Adrenal gland (tissue), 19 donors: ENCODE measurements at regions of chr10 and their contacts with region 1.

Region 1: DNA sequence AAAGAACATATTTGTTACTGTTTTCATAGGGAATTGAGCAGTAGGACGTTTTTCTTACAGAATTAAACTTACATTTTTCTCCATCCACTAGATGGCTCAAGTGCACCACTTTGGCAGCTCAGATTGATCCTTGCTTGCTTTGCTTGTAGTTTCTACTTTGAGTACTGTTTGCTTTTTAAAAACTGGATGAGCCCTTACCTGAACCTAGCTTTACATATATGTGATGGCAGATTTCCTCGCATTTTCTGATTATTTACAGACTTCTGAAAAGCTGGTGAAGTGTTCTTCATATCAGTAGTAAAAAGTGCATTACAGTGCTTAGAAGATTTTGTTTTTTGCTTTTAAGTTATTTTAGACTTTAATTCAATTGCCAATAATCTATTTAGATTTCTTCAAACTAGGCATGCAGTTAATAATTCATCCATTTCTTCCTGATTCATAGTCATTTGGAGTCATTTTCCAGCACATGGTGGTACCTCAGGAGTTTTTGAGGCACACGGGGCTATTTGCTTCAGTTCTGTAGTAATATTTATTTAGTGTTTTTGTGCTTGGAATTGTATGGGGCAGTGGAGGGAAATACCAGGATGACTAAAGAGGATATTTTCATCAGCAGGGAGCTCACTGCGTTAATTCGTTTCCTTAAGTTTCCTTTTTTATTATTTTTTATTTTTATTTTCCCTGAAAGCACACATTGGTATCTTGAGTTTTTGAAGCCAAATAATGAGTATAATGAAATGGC is 57.3 kb downstream of the MAPK8 start:
- DNase-seq: peak; percentile 18 to 67 (median 42)
- H3K4me3 ChIP-seq: no peak overlapping the region
- H3K27ac ChIP-seq: no peak overlapping the region
- H3K4me1 ChIP-seq: peaks cover 0 to 13% of the 10 kb centered on the region in 2 donors
- H3K27me3 ChIP-seq: no peaks in the 10 kb centered on the region
- CTCF ChIP-seq: peak; percentile 61 to 84 (median 77)
- POLR2A ChIP-seq: no peak

Region 2: GRCh38 chr10:48506147-48506917 is 142.5 kb after region 1 on chr10:
- intact Hi-C with region 1: loop called in 1 of 2 experiments (anchors 10 kb)
- DNase-seq: peak in 3 of 7 donors; percentile 32 to 56 (median 41)
- H3K4me3 ChIP-seq: no peak overlapping the region
- H3K27ac ChIP-seq: no peak overlapping the region
- H3K4me1 ChIP-seq: no peaks in the 10 kb centered on the region
- H3K27me3 ChIP-seq: no peaks in the 10 kb centered on the region
- CTCF ChIP-seq: peak; percentile 6 to 52 (median 30)
- POLR2A ChIP-seq: no peak

Region 3: GRCh38 chr10:48708144-48708543 is 344.4 kb after region 1 on chr10:
- intact Hi-C with region 1: no loop called
- DNase-seq: peak in 1 of 7 donors; percentile 7
- H3K4me3 ChIP-seq: no peak overlapping the region
- H3K27ac ChIP-seq: no peak overlapping the region
- H3K4me1 ChIP-seq: no peaks in the 10 kb centered on the region
- H3K27me3 ChIP-seq: peaks cover 4% of the 10 kb centered on the region
- CTCF ChIP-seq: no peak
- POLR2A ChIP-seq: no peak

Region 4: GRCh38 chr10:48759113-48759901 is 395.5 kb after region 1 on chr10:
- intact Hi-C with region 1: no loop called
- DNase-seq: no peak
- H3K4me3 ChIP-seq: no peak overlapping the region
- H3K27ac ChIP-seq: no peak overlapping the region
- H3K4me1 ChIP-seq: no peaks in the 10 kb centered on the region
- H3K27me3 ChIP-seq: no peaks in the 10 kb centered on the region
- CTCF ChIP-seq: no peak
- POLR2A ChIP-seq: no peak